CD4-positive, alpha-beta T cell (primary cell): ENCODE measurements at regions of chr1 and their contacts with region 1.

Region 1: DNA sequence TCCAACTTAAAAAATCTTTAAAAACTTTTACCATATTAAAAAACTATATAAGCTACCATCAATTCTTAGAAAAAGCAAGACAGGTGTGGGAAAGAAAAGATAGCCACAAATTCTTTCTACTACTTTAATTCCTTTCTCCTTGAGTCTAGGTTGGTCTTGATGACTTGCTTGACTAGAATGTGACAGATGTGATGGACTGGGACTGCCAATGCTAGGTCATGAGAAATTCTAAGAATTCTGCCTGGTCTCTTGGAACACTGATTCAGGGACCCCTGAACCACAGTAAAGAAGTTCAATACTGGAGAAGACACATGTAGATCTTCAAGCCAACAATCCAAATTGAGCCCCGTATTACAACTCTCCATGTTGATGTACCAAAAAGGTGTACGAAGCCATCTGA is 326.6 kb upstream of the B3GALT2 start:
- DNase-seq: no peak
- ATAC-seq: no peak
- H3K4me3 ChIP-seq: no peak overlapping the region
- H3K4me3 Mint-ChIP-seq: no peak overlapping the region
- H3K27ac ChIP-seq: no peak overlapping the region
- H3K27ac Mint-ChIP-seq: no peak overlapping the region
- H3K4me1 ChIP-seq: no peaks in the 10 kb centered on the region
- H3K4me1 Mint-ChIP-seq: peaks cover 7% of the 10 kb centered on the region
- H3K27me3 ChIP-seq: no peaks in the 10 kb centered on the region
- H3K27me3 Mint-ChIP-seq: no peaks in the 10 kb centered on the region
- CTCF ChIP-seq: no peak

Region 2: DNA sequence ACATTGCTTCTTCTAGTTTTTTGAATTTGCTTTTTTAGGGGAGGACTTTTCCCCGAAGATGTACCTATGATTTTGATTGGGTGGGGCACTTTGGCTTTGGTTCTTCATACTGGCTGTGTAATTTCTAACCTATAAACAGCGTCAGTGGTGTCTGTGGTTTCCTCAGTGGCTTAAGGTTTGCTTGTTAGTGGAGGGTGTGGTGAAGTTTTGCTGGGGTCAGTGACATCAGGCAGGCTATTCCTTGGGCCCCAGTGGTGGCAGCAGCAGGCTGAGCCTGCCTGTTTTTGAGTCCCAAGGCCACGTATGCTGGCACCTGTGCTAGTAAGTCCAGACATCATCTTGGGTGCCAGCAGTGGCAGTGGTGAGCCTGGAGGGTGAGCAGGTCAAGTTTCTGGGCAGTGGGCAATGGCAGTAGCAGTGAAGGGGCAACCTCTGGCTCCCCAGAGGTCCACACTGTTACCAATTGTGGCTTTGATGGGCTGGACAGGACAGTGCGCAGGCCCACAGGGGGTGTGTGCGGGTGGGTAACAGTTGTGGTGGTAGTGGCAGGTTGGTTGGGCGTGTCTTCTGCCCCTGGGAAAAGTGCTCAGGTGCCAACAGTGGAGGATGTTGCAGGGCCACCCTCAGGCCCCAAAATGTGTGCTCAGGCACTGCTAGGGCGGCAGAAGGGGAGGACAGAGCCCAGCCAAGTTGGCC is 271.8 kb before region 1 on chr1:
- CTCF ChIA-PET with region 1: no interaction called
- POLR2A ChIA-PET with region 1: no interaction called
- intact Hi-C with region 1: no loop called
- DNase-seq: peak in 2 of 14 experiments; percentile 5 to 38
- ATAC-seq: no peak
- H3K4me3 ChIP-seq: no peak overlapping the region
- H3K4me3 Mint-ChIP-seq: no peak overlapping the region
- H3K27ac ChIP-seq: no peak overlapping the region
- H3K27ac Mint-ChIP-seq: no peak overlapping the region
- H3K4me1 ChIP-seq: peaks cover 9% of the 10 kb centered on the region
- H3K4me1 Mint-ChIP-seq: peaks cover 32% of the 10 kb centered on the region
- H3K27me3 ChIP-seq: no peaks in the 10 kb centered on the region
- H3K27me3 Mint-ChIP-seq: no peaks in the 10 kb centered on the region
- CTCF ChIP-seq: no peak

Region 3: GRCh38 chr1:193525917-193526710 is 13.1 kb after region 1 on chr1:
- CTCF ChIA-PET with region 1: no interaction called
- POLR2A ChIA-PET with region 1: interaction called, 3 read pairs
- intact Hi-C with region 1: loop called in 1 of 2 experiments (anchors 2 kb)
- DNase-seq: peak in 1 of 14 experiments; percentile 24
- ATAC-seq: no peak
- H3K4me3 ChIP-seq: no peak overlapping the region
- H3K4me3 Mint-ChIP-seq: no peak overlapping the region
- H3K27ac ChIP-seq: no peak overlapping the region
- H3K27ac Mint-ChIP-seq: no peak overlapping the region
- H3K4me1 ChIP-seq: no peaks in the 10 kb centered on the region
- H3K4me1 Mint-ChIP-seq: no peaks in the 10 kb centered on the region
- H3K27me3 ChIP-seq: no peaks in the 10 kb centered on the region
- H3K27me3 Mint-ChIP-seq: no peaks in the 10 kb centered on the region
- CTCF ChIP-seq: no peak

Region 4: GRCh38 chr1:193545171-193545570 is 32.1 kb after region 1 on chr1:
- CTCF ChIA-PET with region 1: no interaction called
- POLR2A ChIA-PET with region 1: no interaction called
- intact Hi-C with region 1: no loop called
- DNase-seq: no peak
- ATAC-seq: no peak
- H3K4me3 ChIP-seq: no peak overlapping the region
- H3K4me3 Mint-ChIP-seq: no peak overlapping the region
- H3K27ac ChIP-seq: no peak overlapping the region
- H3K27ac Mint-ChIP-seq: no peak overlapping the region
- H3K4me1 ChIP-seq: peaks cover 21% of the 10 kb centered on the region
- H3K4me1 Mint-ChIP-seq: peaks cover 28% of the 10 kb centered on the region
- H3K27me3 ChIP-seq: no peaks in the 10 kb centered on the region
- H3K27me3 Mint-ChIP-seq: no peaks in the 10 kb centered on the region
- CTCF ChIP-seq: no peak